Right cardiac atrium (tissue), 5 donors: ENCODE measurements at regions of chr6 and their contacts with region 1.

Region 1: GRCh38 chr6:118509009-118509617 is 39.0 kb upstream of the PLN start:
- DNase-seq: peak in 2 of 3 donors; percentile 54 to 58
- ATAC-seq: no peak
- H3K4me3 ChIP-seq: no peak overlapping the region
- H3K27ac ChIP-seq: no peak overlapping the region
- H3K4me1 ChIP-seq: no peaks in the 10 kb centered on the region
- H3K27me3 ChIP-seq: no peaks in the 10 kb centered on the region

Region 2: GRCh38 chr6:118307581-118307980 is 201.5 kb before region 1 on chr6:
- intact Hi-C with region 1: loop called in 1 of 4 experiments (anchors 5 kb)
- DNase-seq: peak; percentile 46 to 78 (median 54)
- ATAC-seq: peak; percentile 79 to 81
- H3K4me3 ChIP-seq: no peak overlapping the region
- H3K27ac ChIP-seq: peak overlapping the region; percentile 82
- H3K4me1 ChIP-seq: peaks cover 4% of the 10 kb centered on the region
- H3K27me3 ChIP-seq: no peaks in the 10 kb centered on the region

Region 3: DNA sequence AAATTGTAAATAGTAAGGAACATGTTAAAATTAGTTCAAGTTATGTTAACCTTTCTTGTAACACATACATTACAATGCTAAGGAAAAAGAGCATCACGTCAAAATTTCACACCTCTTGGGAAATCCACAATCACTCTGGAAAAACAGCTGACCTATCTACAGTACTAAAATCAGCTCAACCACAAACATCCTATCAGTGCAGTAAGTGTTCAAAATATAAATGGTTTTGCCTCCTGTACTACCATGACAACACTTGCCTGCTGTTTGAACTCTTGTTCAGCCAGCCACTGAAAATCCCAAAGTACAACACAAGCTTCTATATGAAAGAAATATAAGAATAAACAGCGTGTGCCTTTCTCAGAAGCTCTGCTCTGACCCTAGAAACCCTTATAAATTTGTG is 44.5 kb before region 1 on chr6:
- intact Hi-C with region 1: loop called in 1 of 4 experiments (anchors 2 kb)
- DNase-seq: no peak
- ATAC-seq: peak; percentile 47 to 65
- H3K4me3 ChIP-seq: no peak overlapping the region
- H3K27ac ChIP-seq: peak overlapping the region; percentile 23
- H3K4me1 ChIP-seq: no peaks in the 10 kb centered on the region
- H3K27me3 ChIP-seq: no peaks in the 10 kb centered on the region